ENCODE measurements at regions of chr22 and their contacts with region 1.

Region 1: GRCh38 chr22:29200901-29201300 is 4.8 kb upstream of the EMID1 start:
- DNase-seq: no peak
- ATAC-seq: no peak
- H3K4me3 ChIP-seq: no peak overlapping the region
- H3K27ac ChIP-seq: no peak overlapping the region
- H3K4me1 ChIP-seq: no peaks in the 10 kb centered on the region
- H3K27me3 ChIP-seq: no peaks in the 10 kb centered on the region
- CTCF ChIP-seq: no peak

Region 2: GRCh38 chr22:29225422-29226131 is 24.7 kb after region 1 on chr22:
- CTCF ChIA-PET with region 1: no interaction called
- POLR2A ChIA-PET with region 1: interaction called, 12 read pairs
- in situ Hi-C with region 1: no loop called
- intact Hi-C with region 1: no loop called
- DNase-seq: no peak
- ATAC-seq: peak; percentile 65; the same call in 1 of the 2 replicates
- H3K4me3 ChIP-seq: no peak overlapping the region
- H3K27ac ChIP-seq: no peak overlapping the region
- H3K4me1 ChIP-seq: peaks cover 1% of the 10 kb centered on the region
- H3K27me3 ChIP-seq: no peaks in the 10 kb centered on the region
- CTCF ChIP-seq: no peak